ENCODE measurements at regions of chr14 and their contacts with region 1.

Region 1: DNA sequence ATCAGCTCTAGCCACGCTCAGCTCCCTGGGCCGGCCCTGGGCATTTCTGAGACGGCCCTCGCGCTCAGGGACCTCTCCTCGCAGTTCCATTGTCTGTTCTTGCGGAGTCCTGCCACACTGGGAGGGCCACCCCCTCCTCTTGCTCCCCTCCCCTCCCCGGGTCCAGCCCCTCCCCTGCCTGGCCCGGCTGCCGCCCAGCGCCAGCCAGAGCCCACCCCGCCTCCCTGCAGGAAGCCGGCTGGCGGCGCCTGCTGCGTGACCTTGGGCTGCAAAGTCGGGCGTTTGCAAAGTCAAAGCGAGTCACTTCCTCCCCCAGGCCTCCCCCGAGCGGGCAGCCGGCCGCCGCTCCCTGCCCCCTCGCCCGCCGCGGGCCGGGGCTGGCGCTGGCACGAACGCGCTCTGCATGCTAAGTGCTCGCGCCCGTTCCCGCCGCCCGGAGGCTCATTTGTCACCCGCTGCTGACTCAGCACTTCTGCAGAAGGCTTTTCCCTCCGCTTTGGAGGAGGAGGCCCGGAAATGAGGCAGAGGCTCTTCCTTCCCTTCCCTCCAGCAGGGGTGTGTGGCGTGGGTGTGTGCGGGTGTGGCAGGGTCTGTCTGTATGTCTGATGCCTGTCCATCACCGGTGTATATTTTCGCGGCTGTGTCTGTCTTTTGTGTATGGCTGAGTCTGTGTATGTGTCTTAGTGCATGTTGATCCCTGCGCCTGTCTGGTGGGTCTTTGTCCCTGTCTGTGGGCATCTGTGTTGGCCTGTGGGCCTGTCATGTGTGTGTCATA is 72.0 kb downstream of the IRF2BPL start:
- DNase-seq: peak; percentile 92 to 95 (median 94)
- ATAC-seq: peak; percentile 61 to 86 (median 78)
- H3K4me3 ChIP-seq: peak overlapping the region in 11 of 12 donors; percentile 6 to 57 (median 49)
- H3K27ac ChIP-seq: peak overlapping the region; percentile 88 to 99 (median 95)
- H3K4me1 ChIP-seq: peaks cover 12 to 82% (median 53%) of the 10 kb centered on the region in 12 donors
- H3K27me3 ChIP-seq: no peaks in the 10 kb centered on the region
- CTCF ChIP-seq: peak in 4 of 12 donors; percentile 5 to 31 (median 10)
- POLR2A ChIP-seq: peak in 1 of 2 donors; percentile 35

Region 2: DNA sequence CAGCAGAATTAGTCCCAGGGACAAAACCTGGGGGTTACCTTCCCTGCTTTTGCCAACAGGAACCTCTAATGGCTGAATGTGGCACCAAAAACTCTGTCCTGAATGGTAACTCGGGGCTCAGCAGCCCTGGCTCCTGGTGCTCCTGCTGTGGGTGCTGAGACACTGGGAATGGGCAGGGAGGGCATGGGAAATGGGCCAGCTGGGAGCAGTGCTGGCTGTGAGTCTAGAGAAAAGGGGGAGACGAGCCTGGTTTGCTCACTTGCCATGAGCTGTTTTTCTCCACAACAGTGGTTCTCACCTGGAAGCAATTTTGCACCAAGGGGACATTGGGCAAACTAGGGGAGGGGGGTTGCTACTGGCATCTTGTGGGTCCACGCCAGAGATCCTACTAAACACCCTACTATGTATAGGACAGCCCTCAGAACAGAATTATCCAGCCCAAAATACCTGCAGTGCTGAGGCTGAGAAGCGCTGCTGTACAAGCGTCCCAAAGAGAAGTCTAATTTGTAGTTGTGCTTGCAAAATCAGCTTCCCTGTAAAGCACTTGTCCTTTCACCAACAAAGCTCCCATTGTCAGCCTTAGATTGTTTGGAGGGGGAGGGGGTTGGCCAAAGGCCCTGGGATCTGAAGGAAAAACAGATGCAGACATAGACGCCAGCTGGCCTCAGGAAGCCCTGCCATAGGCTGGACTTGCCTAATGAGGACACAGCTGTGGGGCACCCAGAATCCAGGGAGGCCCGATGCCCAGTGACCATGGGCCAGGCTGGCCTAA is 126.7 kb before region 1 on chr14:
- intact Hi-C with region 1: no loop called
- DNase-seq: peak; percentile 72 to 87 (median 79)
- ATAC-seq: peak in 3 of 4 donors; percentile 71 to 73 (median 72)
- H3K4me3 ChIP-seq: no peak overlapping the region
- H3K27ac ChIP-seq: peak overlapping the region; percentile 40 to 84 (median 77)
- H3K4me1 ChIP-seq: peaks cover 0 to 48% (median 21%) of the 10 kb centered on the region in 12 donors
- H3K27me3 ChIP-seq: no peaks in the 10 kb centered on the region
- CTCF ChIP-seq: no peak
- POLR2A ChIP-seq: no peak

Region 3: DNA sequence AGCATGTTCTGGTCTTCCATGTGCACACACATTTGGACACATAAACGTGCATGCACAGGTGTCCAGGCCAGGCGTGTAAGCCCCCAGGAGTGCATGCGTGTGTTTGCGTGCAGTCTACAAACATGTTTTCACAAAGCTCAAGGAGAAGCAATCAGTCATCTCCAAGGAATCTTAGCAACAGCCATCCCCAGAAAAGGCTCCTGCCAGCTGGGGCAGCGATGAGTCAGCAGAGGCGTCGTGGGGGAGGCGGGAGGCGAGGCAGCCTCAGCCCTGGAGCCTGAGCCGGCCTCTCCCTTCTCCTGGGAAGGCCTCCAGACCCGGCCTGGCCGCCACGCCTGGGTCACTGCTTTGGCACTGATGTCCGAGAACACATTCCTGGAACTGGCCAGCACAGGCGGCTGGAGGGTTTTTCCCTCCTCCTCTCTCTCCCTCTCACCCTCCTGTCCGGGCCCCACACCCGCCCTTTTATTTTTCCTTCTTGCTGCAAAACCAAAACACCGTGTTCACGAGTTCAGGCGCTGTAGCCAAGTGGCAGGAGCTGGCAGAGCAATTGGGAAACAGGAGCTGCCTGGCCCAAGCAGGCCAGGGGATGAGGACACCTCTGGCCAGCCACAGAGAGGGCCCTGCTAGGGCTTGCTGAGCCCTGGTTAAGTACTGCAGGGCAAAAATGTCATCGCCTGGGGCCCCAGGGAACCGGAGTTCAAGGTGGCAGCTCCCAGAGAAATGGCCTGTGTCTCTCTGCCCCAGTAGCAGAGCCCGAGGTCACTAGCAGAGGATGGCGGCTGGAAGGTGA is 37.6 kb before region 1 on chr14:
- intact Hi-C with region 1: loop called in 9 of 10 experiments (anchors 2 to 5 kb)
- DNase-seq: peak; percentile 91 to 98 (median 96)
- ATAC-seq: peak; percentile 86 to 91 (median 90)
- H3K4me3 ChIP-seq: peak overlapping the region in 4 of 12 donors; percentile 1 to 19 (median 4)
- H3K27ac ChIP-seq: peak overlapping the region; percentile 88 to 99 (median 94)
- H3K4me1 ChIP-seq: peaks cover 21 to 70% (median 50%) of the 10 kb centered on the region in 12 donors
- H3K27me3 ChIP-seq: no peaks in the 10 kb centered on the region
- CTCF ChIP-seq: peak in 2 of 12 donors; percentile 9 to 17
- POLR2A ChIP-seq: peak in 1 of 2 donors; percentile 37

Region 4: GRCh38 chr14:77023001-77023996 is 66.8 kb after region 1 on chr14:
- intact Hi-C with region 1: loop called in 7 of 10 experiments (anchors 1 to 5 kb)
- DNase-seq: peak in 2 of 5 donors; percentile 46
- ATAC-seq: peak; percentile 35 to 64 (median 56)
- H3K4me3 ChIP-seq: peak overlapping the region in 10 of 12 donors; percentile 6 to 96 (median 82)
- H3K27ac ChIP-seq: peak overlapping the region; percentile 73 to 100 (median 99)
- H3K4me1 ChIP-seq: peaks cover 10 to 47% (median 36%) of the 10 kb centered on the region in 12 donors
- H3K27me3 ChIP-seq: no peaks in the 10 kb centered on the region
- CTCF ChIP-seq: peak in 3 of 12 donors; percentile 20 to 27 (median 23)
- POLR2A ChIP-seq: no peak

Region 5: GRCh38 chr14:77040059-77040740 is 83.7 kb after region 1 on chr14:
- intact Hi-C with region 1: loop called in 4 of 10 experiments (anchors 5 kb)
- DNase-seq: peak; percentile 100
- ATAC-seq: peak; percentile 81 to 91 (median 90)
- H3K4me3 ChIP-seq: peak overlapping the region in 10 of 12 donors; percentile 28 to 55 (median 42)
- H3K27ac ChIP-seq: peak overlapping the region; percentile 92 to 99 (median 97)
- H3K4me1 ChIP-seq: peaks cover 37 to 97% (median 83%) of the 10 kb centered on the region in 12 donors
- H3K27me3 ChIP-seq: no peaks in the 10 kb centered on the region
- CTCF ChIP-seq: no peak
- POLR2A ChIP-seq: peak in 1 of 2 donors; percentile 22

Region 6: GRCh38 chr14:77053046-77053841 is 96.7 kb after region 1 on chr14:
- intact Hi-C with region 1: loop called in 3 of 10 experiments (anchors 5 kb)
- DNase-seq: peak; percentile 73 to 90 (median 86)
- ATAC-seq: peak; percentile 37 to 78 (median 70)
- H3K4me3 ChIP-seq: no peak overlapping the region
- H3K27ac ChIP-seq: peak overlapping the region in 10 of 12 donors; percentile 16 to 90 (median 75)
- H3K4me1 ChIP-seq: peaks cover 0 to 45% (median 18%) of the 10 kb centered on the region in 12 donors
- H3K27me3 ChIP-seq: no peaks in the 10 kb centered on the region
- CTCF ChIP-seq: peak; percentile 88 to 98 (median 92)
- POLR2A ChIP-seq: no peak